ENCODE measurements at regions of chr15 and their contacts with region 1.

Region 1: DNA sequence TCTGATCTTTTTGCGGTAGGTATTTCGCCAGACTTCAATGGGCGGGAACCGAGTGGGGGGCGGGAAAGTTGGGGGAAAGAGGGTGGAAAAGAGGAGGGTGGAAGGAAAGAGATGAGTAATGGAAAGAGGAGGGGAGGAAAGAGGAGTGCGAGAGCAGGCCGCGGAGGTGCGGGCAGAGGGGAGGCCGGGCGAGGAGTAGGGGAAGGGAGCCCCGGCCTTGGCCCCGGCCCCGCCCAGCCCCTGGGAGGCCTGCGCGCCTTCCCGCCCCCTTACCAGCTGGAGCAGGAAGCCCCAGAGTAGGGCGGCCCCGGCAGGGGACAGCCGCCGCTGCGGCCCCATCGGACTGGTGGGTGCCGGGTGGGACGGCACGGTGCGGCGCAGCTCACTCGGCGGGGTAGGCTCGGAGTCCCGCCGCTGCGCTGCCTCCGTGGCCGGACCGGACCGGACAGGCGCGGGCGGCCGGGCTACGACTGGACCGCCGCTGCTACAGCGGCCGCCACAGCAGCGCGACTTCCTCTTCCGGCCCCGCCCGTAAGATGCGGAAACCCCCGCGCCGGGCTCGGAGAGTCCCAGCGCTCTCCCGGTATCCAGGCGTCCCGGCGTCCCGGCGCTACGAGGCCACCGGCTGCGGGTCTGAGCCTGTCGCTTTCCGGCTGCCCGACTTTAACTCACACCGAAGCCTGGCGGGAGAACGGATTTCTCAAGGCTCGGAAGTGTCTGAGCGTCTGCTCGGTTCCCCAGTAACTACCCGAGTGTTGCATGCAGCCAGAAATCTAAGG is at the start of gene SPPL2A:
- DNase-seq: peak; percentile 86
- H3K4me3 ChIP-seq: peak within 1 kb of the TSS; percentile 78
- H3K27ac ChIP-seq: peak within 1 kb of the TSS; percentile 98
- H3K4me1 ChIP-seq: peaks cover 5% of the 10 kb centered on the region
- H3K27me3 ChIP-seq: no peaks in the 10 kb centered on the region
- CTCF ChIP-seq: no peak
- total RNA-seq, gene SPPL2A: 190 to 308 TPM

Region 2: DNA sequence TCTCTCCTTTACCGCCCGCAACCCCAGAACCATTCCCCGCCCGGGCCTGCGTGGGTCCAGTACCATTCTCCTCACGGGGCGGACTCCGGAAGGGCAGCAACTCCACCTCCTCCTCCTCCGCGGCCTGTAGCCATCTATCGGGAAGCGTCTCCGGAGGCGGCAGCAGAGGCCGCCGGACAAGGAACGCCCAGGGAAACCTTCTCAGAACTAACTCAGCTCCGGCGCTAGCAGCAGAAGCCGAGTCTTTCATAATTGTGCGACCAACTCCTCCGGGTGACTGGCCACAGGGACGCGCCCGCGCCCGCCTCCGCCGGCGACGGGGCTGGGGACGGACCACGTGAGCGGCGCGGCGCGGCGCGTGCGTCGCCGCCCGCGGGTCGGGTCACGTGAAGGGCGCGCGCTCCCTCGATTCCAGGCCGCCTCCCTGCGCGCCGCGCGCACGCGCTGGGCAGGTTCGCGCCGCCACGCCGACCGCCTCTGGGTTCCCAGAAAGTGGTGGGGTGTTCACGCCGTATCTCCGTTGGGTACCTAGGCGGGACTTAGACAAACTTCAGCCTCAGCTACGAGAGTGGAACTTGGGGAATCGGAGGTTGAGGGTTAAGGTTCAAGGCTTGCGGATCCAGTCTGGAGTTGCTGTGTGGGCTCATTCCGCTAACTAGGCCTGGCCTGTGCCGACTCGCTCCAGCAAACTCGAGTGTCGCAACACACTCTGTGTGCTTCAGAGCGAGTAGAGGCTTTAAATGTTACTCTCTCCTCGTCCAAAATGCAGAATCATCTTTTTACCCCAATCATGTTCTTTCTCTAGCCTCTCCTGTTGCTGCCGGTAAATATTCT is 78.7 kb before region 1 on chr15 and contains the start of gene TRPM7:
- intact Hi-C with region 1: loop called (anchors 5 kb)
- DNase-seq: peak; percentile 88
- H3K4me3 ChIP-seq: peak within 1 kb of the TSS; percentile 84
- H3K27ac ChIP-seq: peak within 1 kb of the TSS; percentile 97
- H3K4me1 ChIP-seq: peaks cover 4% of the 10 kb centered on the region
- H3K27me3 ChIP-seq: no peaks in the 10 kb centered on the region
- CTCF ChIP-seq: no peak
- total RNA-seq, gene TRPM7: 28.3 to 34.7 TPM

Region 3: DNA sequence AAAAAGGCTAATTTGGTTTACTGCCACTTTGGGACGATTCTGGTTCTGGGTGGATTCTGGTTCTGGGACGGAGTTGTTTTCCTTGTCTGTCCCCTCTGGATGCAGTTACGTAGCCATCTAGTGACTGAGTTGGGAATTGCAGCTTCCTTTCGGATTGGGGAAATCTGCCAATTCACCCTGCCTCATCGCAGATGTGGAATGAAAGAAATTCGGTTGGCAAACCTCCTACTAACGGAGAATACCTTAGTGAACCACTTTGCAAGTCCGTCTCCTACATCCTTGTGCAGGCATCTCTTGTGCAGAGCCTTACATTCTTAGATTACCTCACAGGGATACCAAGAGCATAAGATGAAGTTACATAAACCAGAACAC is 111.6 kb after region 1 on chr15:
- intact Hi-C with region 1: loop called (anchors 10 kb)
- DNase-seq: peak; percentile 92
- H3K4me3 ChIP-seq: peak overlapping the region; percentile 17
- H3K27ac ChIP-seq: peak overlapping the region; percentile 45
- H3K4me1 ChIP-seq: no peaks in the 10 kb centered on the region
- H3K27me3 ChIP-seq: no peaks in the 10 kb centered on the region
- CTCF ChIP-seq: peak; percentile 97

Region 4: GRCh38 chr15:50904211-50904610 is 138.8 kb after region 1 on chr15:
- intact Hi-C with region 1: no loop called
- DNase-seq: no peak
- H3K4me3 ChIP-seq: no peak overlapping the region
- H3K27ac ChIP-seq: no peak overlapping the region
- H3K4me1 ChIP-seq: peaks cover 5% of the 10 kb centered on the region
- H3K27me3 ChIP-seq: no peaks in the 10 kb centered on the region
- CTCF ChIP-seq: no peak